T-cell (primary cell): ENCODE measurements at regions of chr4 and their contacts with region 1.

Region 1: GRCh38 chr4:128461291-128462102 is 173.9 kb upstream of the PGRMC2 start:
- DNase-seq: no peak
- ATAC-seq: no peak
- H3K4me3 ChIP-seq: no peak overlapping the region
- H3K4me3 Mint-ChIP-seq: no peak overlapping the region
- H3K27ac ChIP-seq: no peak overlapping the region
- H3K27ac Mint-ChIP-seq: no peak overlapping the region
- H3K4me1 ChIP-seq: no peaks in the 10 kb centered on the region
- H3K4me1 Mint-ChIP-seq: no peaks in the 10 kb centered on the region
- H3K27me3 ChIP-seq: no peaks in the 10 kb centered on the region
- H3K27me3 Mint-ChIP-seq: no peaks in the 10 kb centered on the region

Region 2: DNA sequence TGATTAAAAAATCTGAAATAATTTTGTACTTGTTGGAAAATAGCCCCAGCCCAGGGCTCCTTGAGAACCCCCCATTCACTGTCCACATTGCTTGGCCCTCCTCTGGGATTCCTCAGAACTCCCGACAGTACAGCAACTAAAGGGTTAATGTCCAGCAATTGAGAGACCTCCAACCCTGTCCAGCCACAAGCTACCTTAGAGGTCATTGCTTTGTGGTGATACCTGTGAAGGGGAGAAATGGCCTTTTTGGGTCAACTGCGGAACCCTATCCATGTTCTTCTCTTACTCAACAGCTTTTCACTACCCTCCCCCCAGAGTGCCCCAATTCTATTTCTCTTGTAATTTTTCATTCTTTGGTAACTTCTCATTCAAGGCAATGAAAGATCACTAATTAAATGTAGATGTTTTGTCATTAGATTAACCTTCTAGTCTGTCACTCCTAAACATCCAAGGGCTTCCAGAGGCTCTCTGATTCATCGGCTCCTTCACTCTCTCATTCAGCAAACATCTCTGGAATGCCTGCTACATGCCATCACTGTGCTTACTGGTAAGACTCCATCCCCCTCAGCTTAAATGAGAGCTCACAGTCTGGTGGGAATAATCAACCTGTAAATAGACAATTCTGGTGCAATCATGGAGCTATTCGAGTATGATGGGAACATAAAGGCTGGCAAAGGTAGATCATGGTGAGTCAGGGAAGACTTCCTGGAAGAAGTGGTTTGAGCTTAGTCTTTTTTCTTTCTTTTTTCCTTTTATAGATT is 67.5 kb after region 1 on chr4:
- CTCF ChIA-PET with region 1: interaction called in 1 of 2 experiments, 11 read pairs
- POLR2A ChIA-PET with region 1: no interaction called
- DNase-seq: no peak
- ATAC-seq: no peak
- H3K4me3 ChIP-seq: no peak overlapping the region
- H3K4me3 Mint-ChIP-seq: no peak overlapping the region
- H3K27ac ChIP-seq: no peak overlapping the region
- H3K27ac Mint-ChIP-seq: no peak overlapping the region
- H3K4me1 ChIP-seq: no peaks in the 10 kb centered on the region
- H3K4me1 Mint-ChIP-seq: no peaks in the 10 kb centered on the region
- H3K27me3 ChIP-seq: no peaks in the 10 kb centered on the region
- H3K27me3 Mint-ChIP-seq: peaks cover 6 to 9% of the 10 kb centered on the region in 2 donors